Activated CD4-positive, alpha-beta memory T cell treated with anti-CD3 and anti-CD28 coated beads, Interleukin-2, amount 10 ng/mL, durations not matched to agents 7 days and 5 days (primary cell): ENCODE measurements at regions of chr18 and their contacts with region 1.

Region 1: DNA sequence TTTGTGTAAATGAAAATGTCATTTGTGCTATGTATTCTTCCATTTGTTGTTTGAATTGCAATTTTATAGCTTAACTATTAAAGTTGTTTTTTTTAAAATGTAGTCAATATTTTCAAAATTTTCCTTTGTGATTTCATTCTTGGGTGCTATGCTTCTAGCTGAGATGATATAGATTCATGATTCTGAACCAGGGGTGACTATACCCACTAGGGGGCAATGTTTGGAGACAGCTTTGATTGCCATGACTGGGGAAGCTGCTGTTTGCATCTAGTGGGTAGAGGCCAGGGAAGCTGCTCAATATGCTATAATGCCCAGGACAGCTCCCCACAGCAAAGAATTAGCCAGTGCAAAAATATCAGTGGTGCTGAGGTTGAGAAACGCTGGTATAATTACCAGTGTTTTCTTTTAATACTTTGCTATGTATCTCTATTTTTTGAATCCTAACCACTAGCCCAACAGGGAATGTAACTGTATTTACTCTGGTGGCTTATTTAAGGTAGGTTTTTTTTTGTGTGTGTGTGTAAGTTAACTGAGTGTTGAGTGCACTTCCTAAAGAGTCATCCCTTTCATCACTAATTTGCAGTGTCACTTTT is 99.7 kb downstream of the MEP1B start:
- DNase-seq: peak; percentile 21
- H3K4me3 Mint-ChIP-seq: no peak overlapping the region
- H3K27ac Mint-ChIP-seq: no peak overlapping the region
- H3K4me1 Mint-ChIP-seq: no peaks in the 10 kb centered on the region
- H3K27me3 Mint-ChIP-seq: peaks cover 2% of the 10 kb centered on the region

Region 2: GRCh38 chr18:32152705-32153448 is 136.7 kb before region 1 on chr18:
- CTCF ChIA-PET with region 1: interaction called, 10 read pairs
- POLR2A ChIA-PET with region 1: no interaction called
- DNase-seq: no peak
- H3K4me3 Mint-ChIP-seq: no peak overlapping the region
- H3K27ac Mint-ChIP-seq: no peak overlapping the region
- H3K4me1 Mint-ChIP-seq: peaks cover 14% of the 10 kb centered on the region
- H3K27me3 Mint-ChIP-seq: peaks cover 33% of the 10 kb centered on the region

Region 3: GRCh38 chr18:32470713-32471633 is 181.4 kb after region 1 on chr18 and contains the start of gene GAREM1:
- CTCF ChIA-PET with region 1: interaction called, 18 read pairs
- POLR2A ChIA-PET with region 1: no interaction called
- DNase-seq: peak; percentile 86
- H3K4me3 Mint-ChIP-seq: peak within 1 kb of the TSS; percentile 68
- H3K27ac Mint-ChIP-seq: no peak within 1 kb of the TSS
- H3K4me1 Mint-ChIP-seq: peaks cover 25% of the 10 kb centered on the region
- H3K27me3 Mint-ChIP-seq: peaks cover 64% of the 10 kb centered on the region
- total RNA-seq, gene GAREM1: 0.18 TPM in 1 of 2 experiments, not detected in the other